Activated CD4-positive, alpha-beta T cell treated with anti-CD3 and anti-CD28 coated beads, Interleukin-2, amount 10 ng/mL, durations not matched to agents 24 days and 14 days (primary cell): ENCODE measurements at regions of chr16 and their contacts with region 1.

Region 1: GRCh38 chr16:31179747-31180459 is at the start of gene FUS:
- DNase-seq: peak; percentile 97
- H3K4me3 Mint-ChIP-seq: peak within 1 kb of the TSS; percentile 100
- H3K27ac Mint-ChIP-seq: peak within 1 kb of the TSS; percentile 98
- H3K4me1 Mint-ChIP-seq: peaks cover 53% of the 10 kb centered on the region
- H3K27me3 Mint-ChIP-seq: peaks cover 2% of the 10 kb centered on the region
- total RNA-seq, gene FUS: 936 and 955 TPM in 2 replicates

Region 2: GRCh38 chr16:31094424-31095120 is 85.3 kb before region 1 on chr16 and contains the start of gene VKORC1:
- intact Hi-C with region 1: loop called (anchors 2 kb)
- DNase-seq: peak; percentile 96
- H3K4me3 Mint-ChIP-seq: peak within 1 kb of the TSS; percentile 95
- H3K27ac Mint-ChIP-seq: peak within 1 kb of the TSS; percentile 94
- H3K4me1 Mint-ChIP-seq: peaks cover 23% of the 10 kb centered on the region
- H3K27me3 Mint-ChIP-seq: no peaks in the 10 kb centered on the region
- total RNA-seq, gene VKORC1: 56.2 and 59.1 TPM in 2 replicates

Region 3: DNA sequence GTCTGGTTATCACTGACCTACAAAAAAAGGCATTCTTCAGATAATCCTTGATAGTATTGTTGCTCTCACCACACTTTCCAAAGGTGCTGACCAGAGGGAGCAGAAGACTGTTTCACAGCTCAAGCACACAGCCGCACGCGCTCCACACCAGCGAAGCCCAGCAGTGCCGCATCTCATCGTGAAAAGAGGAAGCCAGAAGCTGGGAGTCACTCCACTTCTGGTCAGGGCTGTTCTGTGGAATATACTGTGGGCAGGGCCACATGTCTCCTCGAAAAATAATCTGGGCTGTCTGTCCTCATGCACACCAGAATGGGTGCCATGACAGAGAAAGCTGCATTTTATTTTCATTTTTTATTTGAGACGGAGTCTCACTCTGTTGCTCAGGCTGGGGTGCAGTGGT is 22.8 kb before region 1 on chr16:
- intact Hi-C with region 1: loop called (anchors 1 kb)
- DNase-seq: no peak
- H3K4me3 Mint-ChIP-seq: peak overlapping the region; percentile 30
- H3K27ac Mint-ChIP-seq: no peak overlapping the region
- H3K4me1 Mint-ChIP-seq: peaks cover 5% of the 10 kb centered on the region
- H3K27me3 Mint-ChIP-seq: peaks cover 9% of the 10 kb centered on the region

Region 4: DNA sequence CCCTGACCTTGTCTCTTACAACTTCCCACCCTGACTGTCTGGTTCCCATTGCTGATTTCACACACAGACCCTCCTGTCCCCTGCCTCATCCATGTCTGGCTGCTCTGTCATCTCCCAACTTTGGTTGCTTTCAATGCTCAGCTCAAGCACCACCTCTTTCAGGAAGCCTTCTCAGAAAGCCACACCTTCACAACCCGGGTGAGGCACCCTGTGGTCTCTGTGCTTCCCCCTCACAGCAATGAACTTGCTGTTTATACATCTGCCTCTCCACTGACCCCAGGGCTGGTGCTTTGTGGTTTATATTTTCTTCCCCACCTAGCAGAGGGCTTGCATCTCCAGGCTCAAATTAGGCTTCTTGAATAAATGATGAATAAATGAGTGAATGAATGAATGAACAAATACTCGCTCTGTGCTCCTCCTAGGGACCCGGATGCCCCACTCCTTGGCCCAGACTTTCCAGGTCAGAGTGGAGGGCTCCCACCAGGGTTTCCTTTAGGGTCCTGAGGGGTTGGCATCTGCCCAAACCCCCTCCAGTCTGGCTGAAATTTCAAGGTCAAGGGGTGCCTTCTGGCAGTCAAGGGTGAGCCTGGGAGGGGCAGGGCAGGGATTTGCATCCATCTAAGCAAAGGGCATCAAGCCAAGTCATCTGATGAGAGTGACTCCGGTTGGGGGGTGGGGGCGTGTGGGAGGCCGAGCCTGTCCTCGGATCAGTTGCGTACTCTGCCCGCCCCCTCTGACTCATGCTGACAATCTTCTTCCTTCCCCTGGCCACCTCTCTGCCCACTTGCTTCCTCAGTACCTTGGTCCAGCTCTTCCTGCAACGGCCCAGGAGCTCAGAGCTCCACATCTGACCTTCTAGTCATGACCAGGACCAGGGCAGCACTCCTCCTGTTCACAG is 174.7 kb after region 1 on chr16 and contains the start of gene ITGAX:
- intact Hi-C with region 1: loop called (anchors 1 kb)
- DNase-seq: peak; percentile 92
- H3K4me3 Mint-ChIP-seq: peak within 1 kb of the TSS; percentile 91
- H3K27ac Mint-ChIP-seq: peak within 1 kb of the TSS; percentile 95
- H3K4me1 Mint-ChIP-seq: peaks cover 56% of the 10 kb centered on the region
- H3K27me3 Mint-ChIP-seq: no peaks in the 10 kb centered on the region
- total RNA-seq, gene ITGAX: 44.3 and 45.9 TPM in 2 replicates

Region 5: DNA sequence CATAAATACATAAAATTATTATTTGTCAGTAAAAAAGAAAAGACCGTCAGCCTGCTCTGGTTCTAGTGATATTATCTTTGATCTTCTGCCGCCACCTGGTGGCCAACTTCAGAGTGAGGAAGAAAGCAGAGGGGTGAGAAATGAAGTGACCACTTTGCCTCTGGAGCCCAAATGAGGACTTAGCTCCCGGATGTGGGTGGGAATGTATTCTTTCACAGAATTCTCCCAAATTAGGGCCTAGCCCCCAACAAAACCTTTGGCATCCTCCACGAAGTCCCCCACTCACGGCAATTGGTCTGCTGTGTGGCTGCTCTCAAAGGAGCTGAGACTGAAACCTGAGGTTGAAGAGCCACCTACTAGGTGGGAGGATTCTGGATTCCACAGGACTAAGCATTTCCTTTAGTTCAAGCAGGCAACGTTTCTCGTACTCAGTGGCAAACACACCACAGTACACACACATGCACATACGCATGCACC is 688.8 kb after region 1 on chr16:
- intact Hi-C with region 1: loop called (anchors 1 kb)
- DNase-seq: peak; percentile 94
- H3K4me3 Mint-ChIP-seq: peak overlapping the region; percentile 75
- H3K27ac Mint-ChIP-seq: peak overlapping the region; percentile 95
- H3K4me1 Mint-ChIP-seq: peaks cover 53% of the 10 kb centered on the region
- H3K27me3 Mint-ChIP-seq: peaks cover 5% of the 10 kb centered on the region